ENCODE measurements at regions of chr19 and their contacts with region 1.

Region 1: GRCh38 chr19:732148-733069 is 18.5 kb upstream of the MISP start:
- DNase-seq: no peak

Region 2: GRCh38 chr19:588093-588740 is 144.2 kb before region 1 on chr19:
- intact Hi-C with region 1: loop called (anchors 5 kb)
- DNase-seq: peak; percentile 82 to 99 (median 90)

Region 3: DNA sequence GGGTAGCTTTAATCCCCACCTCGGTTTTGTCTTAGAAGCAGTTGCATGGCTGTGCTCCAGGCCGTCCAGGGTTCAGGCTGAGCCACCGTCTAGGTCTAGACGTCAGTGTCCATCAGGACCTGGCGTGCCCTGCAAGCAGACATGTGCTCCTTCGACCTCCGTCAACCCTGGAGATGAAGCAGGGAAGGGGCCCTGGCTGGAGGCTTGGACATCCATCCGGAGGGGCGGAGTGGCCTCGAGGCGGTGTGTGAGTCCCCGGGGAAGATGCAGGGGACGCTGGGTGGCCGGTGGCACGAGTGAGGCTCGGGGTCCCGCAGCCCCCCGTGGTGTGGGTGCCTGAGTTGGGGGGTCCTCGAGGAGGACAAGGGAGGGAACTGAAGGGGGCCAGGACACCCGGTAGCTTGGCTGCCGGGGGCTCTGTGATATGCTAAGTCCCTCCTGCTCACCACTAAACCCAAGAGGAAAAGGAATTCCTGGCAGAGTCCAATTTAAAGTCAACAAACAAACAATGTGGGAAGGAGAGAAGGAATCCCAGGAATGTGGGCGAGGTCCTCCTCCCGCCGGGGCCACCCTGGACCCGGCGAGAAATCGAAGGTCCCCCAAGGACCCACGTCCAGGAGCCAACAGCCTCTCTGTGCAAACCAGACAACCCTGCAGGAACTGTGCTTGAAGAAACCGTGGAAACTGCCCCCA is 49.9 kb after region 1 on chr19:
- intact Hi-C with region 1: no loop called
- DNase-seq: no peak

Measured in posterior cingulate gyrus (tissue), 11 donors.